ENCODE measurements at regions of chr11 and their contacts with region 1.

Region 1: DNA sequence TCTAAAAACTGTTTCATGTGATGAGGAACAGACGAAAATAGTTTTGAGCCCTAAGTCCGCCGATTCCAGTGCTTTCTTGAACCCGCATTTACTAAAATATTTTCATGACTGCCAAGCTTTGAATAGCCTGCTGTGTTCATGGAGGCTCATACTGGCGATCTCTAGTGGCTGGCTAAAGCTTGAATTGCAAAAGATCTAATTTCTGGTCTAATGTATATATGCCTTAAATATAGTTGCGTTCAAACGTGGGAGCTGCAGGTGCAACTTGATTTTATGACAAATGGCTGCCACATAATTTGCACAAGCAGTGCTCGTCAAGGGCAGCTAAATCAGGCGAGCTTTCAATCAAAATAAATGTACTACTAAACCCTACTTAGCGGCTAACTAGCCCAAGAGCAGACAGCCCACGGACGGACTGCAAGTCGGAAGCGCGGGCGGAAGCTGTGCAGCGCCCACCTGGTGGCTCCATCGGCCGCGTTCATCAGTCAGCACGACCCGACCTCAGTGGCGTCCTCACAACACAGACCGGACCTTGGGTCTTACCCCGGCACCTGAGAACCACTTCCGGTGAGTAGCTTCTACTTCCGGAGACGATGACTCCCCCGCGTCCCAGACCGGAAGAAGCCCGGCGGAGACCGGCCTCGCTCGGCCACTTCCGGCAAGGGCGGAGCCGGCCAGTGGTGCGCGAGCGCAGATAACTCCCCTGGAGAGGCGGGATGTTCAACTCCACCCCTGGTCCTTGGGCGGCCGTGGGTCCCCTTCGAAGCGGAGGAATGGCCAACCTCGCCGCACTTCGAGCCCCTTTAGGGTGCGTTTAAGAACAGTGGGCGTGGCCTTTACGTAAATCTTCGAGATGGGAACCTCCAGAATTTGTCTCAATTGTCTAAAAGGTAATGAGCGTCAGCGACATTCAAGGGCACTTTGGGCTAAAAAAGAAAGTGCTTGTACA is 6.1 kb downstream of the RPL27A start:
- DNase-seq: peak; percentile 59
- H3K4me3 ChIP-seq: peak overlapping the region; percentile 71
- CTCF ChIP-seq: no peak

Region 2: DNA sequence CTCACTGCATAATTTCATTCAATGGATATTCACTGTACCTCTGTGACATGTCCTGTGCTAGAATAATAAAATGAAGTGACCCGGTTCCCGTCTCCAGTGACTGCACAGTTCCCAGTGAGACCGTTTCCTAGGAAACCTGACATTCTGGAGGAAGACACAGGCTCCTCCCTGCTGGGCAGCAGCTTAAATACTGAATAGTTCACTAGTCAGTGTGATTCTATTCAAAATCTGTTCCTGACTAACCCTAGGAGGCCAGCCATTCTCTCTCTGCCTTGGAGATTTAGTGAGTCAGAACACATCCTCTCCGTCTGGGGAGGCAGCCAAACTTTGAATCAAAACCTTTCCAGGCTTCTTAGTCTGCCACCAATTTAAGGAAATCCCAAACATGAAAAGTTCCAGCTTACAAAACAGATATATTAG is 17.5 kb before region 1 on chr11:
- CTCF ChIA-PET with region 1: interaction called, 3 read pairs
- POLR2A ChIA-PET with region 1: interaction called, 14 read pairs
- DNase-seq: peak; percentile 91
- H3K4me3 ChIP-seq: no peak overlapping the region
- CTCF ChIP-seq: no peak

Region 3: DNA sequence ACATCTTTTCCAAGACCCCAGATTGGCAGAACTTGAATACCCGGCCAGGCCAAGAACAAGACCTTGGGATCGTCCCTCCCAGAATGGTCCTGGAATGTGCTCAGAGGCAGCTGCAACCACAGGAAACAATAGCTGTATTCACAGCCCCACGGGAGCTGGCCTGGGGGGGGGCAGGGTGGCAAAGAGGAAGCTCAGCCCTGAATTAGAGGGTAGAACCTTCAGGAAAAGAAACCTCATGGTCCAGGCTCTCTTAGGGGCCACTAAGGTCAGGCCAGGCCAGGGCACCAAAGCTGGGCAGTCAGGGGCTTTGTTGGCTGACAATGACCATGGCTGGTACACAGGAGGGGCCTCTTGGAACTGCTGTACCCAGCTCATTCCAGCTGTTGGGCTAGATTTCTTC is 11.2 kb after region 1 on chr11:
- CTCF ChIA-PET with region 1: no interaction called
- POLR2A ChIA-PET with region 1: interaction called, 21 read pairs
- DNase-seq: no peak
- H3K4me3 ChIP-seq: no peak overlapping the region
- CTCF ChIP-seq: no peak

Region 4: DNA sequence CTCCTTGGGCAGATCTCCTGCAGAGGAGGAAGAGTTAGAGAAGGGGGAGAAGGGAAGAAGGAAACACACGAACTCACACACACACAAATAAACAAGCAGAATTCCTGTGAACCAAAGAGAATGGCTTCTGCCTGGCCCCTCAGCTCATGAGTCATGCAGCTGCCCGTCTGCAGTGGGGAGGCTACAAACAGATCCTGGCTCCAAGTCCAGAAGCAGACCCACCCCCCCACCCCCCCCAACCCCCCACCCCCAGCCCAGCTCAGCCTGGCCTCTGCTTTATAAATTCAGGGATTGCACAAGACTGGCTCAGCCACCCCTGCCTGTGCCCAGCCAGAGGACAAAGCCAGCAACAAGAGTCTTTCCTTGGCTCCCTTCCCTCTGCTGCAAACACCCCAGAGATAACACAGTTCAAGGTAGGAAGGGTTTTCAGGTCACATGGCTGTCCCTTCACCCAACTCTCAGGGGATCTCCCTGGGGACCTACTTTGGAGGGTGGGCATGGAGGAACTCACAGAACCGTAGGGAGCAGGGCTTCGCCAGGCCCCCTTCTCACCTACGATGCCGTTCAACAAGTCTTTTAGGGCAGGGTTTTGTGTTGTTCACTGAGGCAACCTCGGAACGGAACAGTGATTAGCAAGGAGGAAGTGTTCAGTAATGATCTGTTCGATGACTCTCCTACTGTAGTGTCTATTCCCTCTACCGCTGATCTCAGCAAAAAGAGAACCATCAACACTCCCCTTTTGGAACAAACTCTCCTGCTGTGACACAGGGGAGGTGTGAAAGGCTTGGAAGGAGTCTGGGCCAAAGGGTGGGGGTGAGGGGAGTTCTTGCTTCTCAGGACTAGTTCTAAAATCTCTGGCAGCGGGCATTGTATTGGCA is 29.4 kb after region 1 on chr11:
- CTCF ChIA-PET with region 1: interaction called, 3 read pairs
- POLR2A ChIA-PET with region 1: interaction called, 14 read pairs
- DNase-seq: peak; percentile 90
- H3K4me3 ChIP-seq: peak overlapping the region; percentile 53
- CTCF ChIP-seq: no peak

Measured in AG04449 (cell line).